Left ventricle myocardium inferior (tissue), 1 donor: ENCODE measurements at regions of chr16 and their contacts with region 1.

Region 1: DNA sequence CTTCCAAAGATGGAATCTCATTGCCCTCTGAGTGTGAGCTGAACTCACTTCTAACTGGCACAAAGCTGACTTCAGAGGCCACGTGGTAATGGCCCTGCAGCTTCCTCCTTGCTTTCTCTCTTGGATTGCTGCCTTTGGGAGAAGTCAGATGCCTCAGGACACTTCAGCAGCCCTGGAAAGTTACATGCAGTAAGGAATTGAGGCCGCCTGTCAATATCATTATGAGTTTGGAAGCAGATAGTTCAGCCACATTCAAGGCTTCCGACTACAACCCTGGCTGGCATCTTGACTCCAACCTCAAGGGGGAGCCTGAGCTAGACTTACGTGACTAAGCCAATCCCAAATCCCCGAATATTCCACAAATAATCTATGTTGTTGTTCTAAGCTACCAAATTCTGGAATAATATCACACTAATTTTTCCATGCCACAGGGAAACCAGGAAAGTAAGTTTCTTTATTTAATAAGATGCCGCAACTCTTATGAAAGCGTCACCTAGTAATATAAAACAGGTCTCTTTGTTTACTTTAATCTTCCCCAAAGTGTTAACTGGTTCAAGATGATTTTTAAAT is 13.6 kb downstream of the CEP20 start:
- DNase-seq: peak; percentile 36
- H3K4me3 ChIP-seq: no peak overlapping the region
- H3K27ac ChIP-seq: peak overlapping the region; percentile 38
- H3K4me1 ChIP-seq: peaks cover 11% of the 10 kb centered on the region
- H3K27me3 ChIP-seq: no peaks in the 10 kb centered on the region
- CTCF ChIP-seq: peak; percentile 82

Region 2: DNA sequence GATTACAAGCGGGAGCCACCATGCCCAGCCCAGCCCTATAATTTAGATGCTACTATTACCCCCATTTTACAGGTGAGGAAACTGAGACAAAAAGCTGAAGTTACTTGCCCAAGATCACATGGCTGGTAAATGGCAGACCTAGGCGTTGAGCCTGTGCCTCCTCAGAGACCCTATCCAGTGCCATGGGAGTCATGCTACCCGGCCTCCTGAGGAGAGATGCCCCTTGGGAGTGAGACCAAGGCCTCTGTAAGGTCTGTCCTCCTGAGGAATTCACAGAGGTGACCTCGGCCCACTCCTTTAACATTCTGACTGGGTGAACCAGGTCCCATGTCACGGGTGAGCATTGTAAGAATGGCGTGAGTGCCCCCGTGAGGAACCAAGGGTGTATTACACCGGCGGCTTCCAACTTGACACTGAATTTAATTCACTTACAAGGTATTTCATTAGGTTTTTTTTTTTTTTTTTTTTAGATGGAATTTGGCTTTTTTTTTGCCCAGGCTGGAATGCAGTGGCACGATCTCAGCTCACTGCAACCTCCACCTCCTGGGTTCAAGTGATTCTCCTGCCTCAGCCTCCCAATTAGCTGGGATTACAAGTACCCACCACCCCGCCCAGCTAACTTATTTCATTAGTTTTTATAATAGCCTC is 252.8 kb after region 1 on chr16:
- intact Hi-C with region 1: loop called (anchors 5 kb)
- DNase-seq: peak; percentile 53
- H3K4me3 ChIP-seq: no peak overlapping the region
- H3K27ac ChIP-seq: no peak overlapping the region
- H3K4me1 ChIP-seq: no peaks in the 10 kb centered on the region
- H3K27me3 ChIP-seq: no peaks in the 10 kb centered on the region
- CTCF ChIP-seq: peak; percentile 93